OCI-LY7 (cell line): ENCODE measurements at regions of chr3 and their contacts with region 1.

Region 1: GRCh38 chr3:137105277-137105977 is 147.6 kb downstream of the IL20RB start:
- DNase-seq: peak; percentile 70
- H3K4me3 ChIP-seq: no peak overlapping the region
- H3K27ac ChIP-seq: no peak overlapping the region
- H3K4me1 ChIP-seq: no peaks in the 10 kb centered on the region
- CTCF ChIP-seq: peak; percentile 91

Region 2: GRCh38 chr3:136973352-136973751 is 132.1 kb before region 1 on chr3:
- CTCF ChIA-PET with region 1: no interaction called
- POLR2A ChIA-PET with region 1: no interaction called
- intact Hi-C with region 1: no loop called
- DNase-seq: no peak
- H3K4me3 ChIP-seq: no peak overlapping the region
- H3K27ac ChIP-seq: no peak overlapping the region
- H3K4me1 ChIP-seq: no peaks in the 10 kb centered on the region
- CTCF ChIP-seq: no peak

Region 3: DNA sequence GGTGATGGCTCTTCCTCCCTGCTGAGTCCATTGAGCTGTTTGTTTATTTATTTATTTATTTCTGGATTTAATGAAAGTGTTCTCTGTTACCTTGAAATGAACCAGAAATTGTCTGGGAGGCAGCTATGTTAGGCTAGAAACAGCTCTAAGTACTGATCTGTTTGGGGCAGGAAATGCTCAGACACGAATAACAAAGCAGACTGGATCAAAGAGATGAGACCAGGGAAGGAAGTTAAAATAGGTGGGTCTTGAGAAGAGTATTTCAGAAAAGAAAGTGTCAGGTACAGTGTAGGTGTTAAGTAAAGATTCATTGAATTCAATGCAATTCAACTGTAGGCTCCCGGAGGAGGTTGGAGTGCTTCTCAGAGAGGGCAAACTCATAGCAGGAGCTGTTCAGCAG is 25.7 kb after region 1 on chr3:
- CTCF ChIA-PET with region 1: no interaction called
- POLR2A ChIA-PET with region 1: no interaction called
- intact Hi-C with region 1: no loop called
- DNase-seq: no peak
- H3K4me3 ChIP-seq: no peak overlapping the region
- H3K27ac ChIP-seq: no peak overlapping the region
- H3K4me1 ChIP-seq: no peaks in the 10 kb centered on the region
- CTCF ChIP-seq: no peak

Region 4: DNA sequence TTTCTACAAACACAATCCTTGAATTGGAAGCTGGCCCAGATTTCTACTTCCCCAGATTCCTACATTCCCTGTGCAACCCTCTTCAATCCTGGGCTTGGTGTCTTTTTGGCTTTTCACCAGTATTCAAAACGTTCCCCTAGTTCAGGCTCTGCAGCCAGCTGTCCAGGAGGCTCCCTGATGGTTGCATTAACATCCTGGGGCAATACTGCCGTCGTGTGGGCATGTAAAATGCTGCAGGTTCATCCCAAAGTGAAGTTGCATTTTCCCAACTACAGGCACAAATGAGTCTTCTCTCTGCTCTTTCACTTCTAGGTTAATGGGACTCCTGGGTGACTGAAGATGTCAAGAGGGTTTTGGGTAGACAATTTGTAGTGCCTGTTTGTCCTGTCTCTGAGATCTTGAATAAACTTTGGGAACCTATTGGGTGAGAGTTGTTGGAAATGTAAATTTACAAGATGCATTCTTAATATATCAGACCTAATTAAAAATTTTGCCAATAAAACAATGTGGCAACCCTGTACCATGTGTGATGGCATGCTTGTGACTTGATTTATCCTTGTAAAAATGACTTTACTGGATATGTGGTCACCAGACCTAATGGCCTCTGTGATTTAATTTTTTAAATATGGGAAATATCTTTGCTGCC is 687.3 kb after region 1 on chr3:
- CTCF ChIA-PET with region 1: no interaction called
- POLR2A ChIA-PET with region 1: no interaction called
- intact Hi-C with region 1: loop called (anchors 10 kb)
- DNase-seq: peak; percentile 27
- H3K4me3 ChIP-seq: no peak overlapping the region
- H3K27ac ChIP-seq: no peak overlapping the region
- H3K4me1 ChIP-seq: no peaks in the 10 kb centered on the region
- CTCF ChIP-seq: peak; percentile 74

Region 5: DNA sequence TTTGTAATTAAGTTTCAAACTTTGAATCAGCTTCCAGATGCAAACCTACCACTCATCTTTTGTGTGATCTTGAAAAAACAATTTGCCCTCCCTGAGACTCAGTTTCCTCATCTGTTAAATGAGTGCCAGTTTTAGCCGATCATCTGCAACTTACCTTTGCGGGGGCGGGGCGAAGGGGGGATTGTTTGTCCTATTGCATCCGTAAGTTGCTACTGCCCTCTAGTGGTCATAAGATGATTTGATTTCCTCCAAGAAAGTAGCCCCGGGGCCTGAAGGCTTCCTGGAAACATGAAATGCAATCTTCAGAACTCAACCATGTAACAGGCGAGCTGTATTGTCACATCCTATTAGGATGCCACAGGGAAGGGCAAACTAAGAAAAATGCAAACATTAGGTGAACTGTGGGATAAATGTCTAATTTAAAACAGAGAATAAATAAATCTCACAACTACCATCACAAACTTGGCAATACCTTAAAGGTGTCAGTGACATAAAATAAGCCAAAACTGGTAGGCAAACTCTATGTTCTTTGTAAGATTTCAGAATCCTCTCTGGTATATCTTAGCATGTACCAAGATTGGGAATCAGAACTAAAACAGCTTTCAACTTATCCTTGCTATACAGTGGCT is 841.0 kb after region 1 on chr3:
- CTCF ChIA-PET with region 1: no interaction called
- POLR2A ChIA-PET with region 1: no interaction called
- intact Hi-C with region 1: loop called (anchors 1 kb)
- DNase-seq: peak; percentile 80
- H3K4me3 ChIP-seq: no peak overlapping the region
- H3K27ac ChIP-seq: no peak overlapping the region
- H3K4me1 ChIP-seq: no peaks in the 10 kb centered on the region
- CTCF ChIP-seq: peak; percentile 94